CD8-positive, alpha-beta T cell (primary cell): ENCODE measurements at regions of chr14 and their contacts with region 1.

Region 1: GRCh38 chr14:91373591-91374254 is 43.9 kb downstream of the CCDC88C start:
- DNase-seq: peak in 7 of 9 experiments; percentile 38 to 87 (median 65)
- ATAC-seq: peak; percentile 53
- H3K4me3 ChIP-seq: peak overlapping the region; percentile 45 to 58
- H3K4me3 Mint-ChIP-seq: peak overlapping the region; percentile 87
- H3K27ac ChIP-seq: peak overlapping the region; percentile 57 to 79
- H3K27ac Mint-ChIP-seq: peak overlapping the region; percentile 95
- H3K4me1 ChIP-seq: peaks cover 98% of the 10 kb centered on the region
- H3K4me1 Mint-ChIP-seq: peaks cover 99% of the 10 kb centered on the region
- H3K27me3 ChIP-seq: no peaks in the 10 kb centered on the region
- H3K27me3 Mint-ChIP-seq: no peaks in the 10 kb centered on the region
- CTCF ChIP-seq: no peak

Region 2: GRCh38 chr14:91396959-91397815 is 23.5 kb after region 1 on chr14:
- CTCF ChIA-PET with region 1: interaction called, 32 read pairs
- POLR2A ChIA-PET with region 1: interaction called, 26 read pairs
- intact Hi-C with region 1: loop called (anchors 2 kb)
- DNase-seq: peak in 7 of 9 experiments; percentile 58 to 81 (median 69)
- ATAC-seq: peak; percentile 55
- H3K4me3 ChIP-seq: peak overlapping the region; percentile 29 to 41
- H3K4me3 Mint-ChIP-seq: peak overlapping the region; percentile 81
- H3K27ac ChIP-seq: peak overlapping the region; percentile 42 to 78
- H3K27ac Mint-ChIP-seq: peak overlapping the region; percentile 90
- H3K4me1 ChIP-seq: peaks cover 92% of the 10 kb centered on the region
- H3K4me1 Mint-ChIP-seq: peaks cover 89% of the 10 kb centered on the region
- H3K27me3 ChIP-seq: no peaks in the 10 kb centered on the region
- H3K27me3 Mint-ChIP-seq: no peaks in the 10 kb centered on the region
- CTCF ChIP-seq: no peak